Right cardiac atrium (tissue), 5 donors: ENCODE measurements at regions of chr20 and their contacts with region 1.

Region 1: GRCh38 chr20:38645980-38646858 is 44.6 kb downstream of the ARHGAP40 start:
- DNase-seq: peak; percentile 73 to 88 (median 84)
- ATAC-seq: peak; percentile 83 to 90
- H3K4me3 ChIP-seq: no peak overlapping the region
- H3K27ac ChIP-seq: no peak overlapping the region
- H3K4me1 ChIP-seq: no peaks in the 10 kb centered on the region
- H3K27me3 ChIP-seq: no peaks in the 10 kb centered on the region

Region 2: GRCh38 chr20:38523697-38524096 is 122.5 kb before region 1 on chr20:
- intact Hi-C with region 1: no loop called
- DNase-seq: no peak
- ATAC-seq: no peak
- H3K4me3 ChIP-seq: no peak overlapping the region
- H3K27ac ChIP-seq: no peak overlapping the region
- H3K4me1 ChIP-seq: no peaks in the 10 kb centered on the region
- H3K27me3 ChIP-seq: no peaks in the 10 kb centered on the region

Region 3: DNA sequence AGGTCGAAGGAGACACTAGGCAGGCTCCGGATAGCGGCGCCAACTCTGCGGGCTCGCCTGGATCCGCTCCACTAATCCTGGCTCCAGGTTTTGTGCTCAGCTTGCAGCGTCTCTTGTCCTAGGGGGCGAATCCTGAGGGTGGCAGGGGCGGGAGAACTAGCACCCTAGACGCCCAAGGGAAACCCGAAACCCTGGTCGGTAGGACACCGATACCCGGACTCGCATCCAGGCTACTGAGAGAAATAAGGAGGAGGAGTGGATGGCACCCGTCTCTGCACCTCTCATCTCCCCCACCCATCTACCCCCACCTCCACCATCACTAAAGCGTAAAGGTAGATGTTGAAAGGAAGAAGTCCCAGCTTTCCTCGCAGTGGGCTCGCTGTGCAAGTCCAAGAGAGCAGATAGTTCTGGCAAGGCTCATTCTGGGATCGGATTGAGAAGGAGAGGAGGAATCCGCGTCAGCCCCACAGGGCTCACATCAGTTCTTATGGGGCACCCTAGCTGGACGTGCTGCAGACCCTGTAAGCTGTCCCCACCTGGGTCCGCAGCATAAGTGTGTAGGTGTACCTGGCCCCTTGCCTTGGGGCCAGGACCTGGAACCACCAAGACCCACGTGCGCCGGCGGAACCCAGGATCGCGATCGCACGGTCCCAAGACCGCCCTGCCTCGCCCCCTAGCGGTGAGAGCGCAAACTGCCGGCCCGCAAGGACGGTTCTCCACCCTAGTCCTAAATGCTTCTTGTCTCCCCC is 84.9 kb after region 1 on chr20:
- intact Hi-C with region 1: loop called in 3 of 4 experiments (anchors 2 to 5 kb)
- DNase-seq: peak; percentile 67 to 86 (median 83)
- ATAC-seq: peak; percentile 76 to 82
- H3K4me3 ChIP-seq: peak overlapping the region; percentile 10
- H3K27ac ChIP-seq: no peak overlapping the region
- H3K4me1 ChIP-seq: no peaks in the 10 kb centered on the region
- H3K27me3 ChIP-seq: no peaks in the 10 kb centered on the region

Region 4: GRCh38 chr20:38751360-38751976 is 105.2 kb after region 1 on chr20:
- intact Hi-C with region 1: loop called in 3 of 4 experiments (anchors 2 to 5 kb)
- DNase-seq: no peak
- ATAC-seq: no peak
- H3K4me3 ChIP-seq: no peak overlapping the region
- H3K27ac ChIP-seq: no peak overlapping the region
- H3K4me1 ChIP-seq: peaks cover 2% of the 10 kb centered on the region
- H3K27me3 ChIP-seq: no peaks in the 10 kb centered on the region

Region 5: GRCh38 chr20:38893565-38894090 is 247.4 kb after region 1 on chr20:
- intact Hi-C with region 1: loop called in 3 of 4 experiments (anchors 5 kb)
- DNase-seq: peak; percentile 49 to 86 (median 83)
- ATAC-seq: peak; percentile 84 to 89
- H3K4me3 ChIP-seq: no peak overlapping the region
- H3K27ac ChIP-seq: no peak overlapping the region
- H3K4me1 ChIP-seq: no peaks in the 10 kb centered on the region
- H3K27me3 ChIP-seq: no peaks in the 10 kb centered on the region